ENCODE measurements at regions of chr16 and their contacts with region 1.

Region 1: GRCh38 chr16:79997257-79997656 is 396.7 kb upstream of the MAF start:
- DNase-seq: peak; percentile 3
- H3K4me3 ChIP-seq: no peak overlapping the region
- H3K27ac ChIP-seq: no peak overlapping the region
- H3K4me1 ChIP-seq: no peaks in the 10 kb centered on the region
- H3K27me3 ChIP-seq: no peaks in the 10 kb centered on the region
- CTCF ChIP-seq: peak in 1 of 2 donors; percentile 26
- POLR2A ChIP-seq: no peak

Region 2: DNA sequence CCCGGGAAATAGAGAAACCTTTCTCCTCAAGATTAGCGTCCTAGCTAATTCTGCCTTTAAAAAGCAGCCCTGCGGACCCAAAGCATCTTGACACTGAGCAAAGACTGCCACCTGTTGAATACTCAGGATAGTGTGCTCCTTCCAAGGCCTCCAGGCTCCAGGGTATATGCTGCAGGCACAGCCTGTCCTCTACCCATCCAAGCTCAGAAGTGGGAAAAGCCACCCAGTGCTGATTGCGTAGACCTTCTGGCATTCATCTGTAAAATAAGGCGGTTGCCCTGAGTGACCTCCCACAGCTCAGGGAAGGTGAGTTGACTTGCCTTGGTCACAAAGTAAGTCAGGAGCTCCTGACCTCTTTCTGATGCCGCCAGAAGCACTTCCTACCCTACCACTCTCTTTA is 87.4 kb after region 1 on chr16:
- CTCF ChIA-PET with region 1: interaction called, 20 read pairs
- POLR2A ChIA-PET with region 1: no interaction called
- dilution Hi-C with region 1: no loop called
- intact Hi-C with region 1: loop called (anchors 10 kb)
- DNase-seq: no peak
- H3K4me3 ChIP-seq: no peak overlapping the region
- H3K27ac ChIP-seq: no peak overlapping the region
- H3K4me1 ChIP-seq: no peaks in the 10 kb centered on the region
- H3K27me3 ChIP-seq: no peaks in the 10 kb centered on the region
- CTCF ChIP-seq: no peak
- POLR2A ChIP-seq: no peak

Region 3: GRCh38 chr16:80317599-80318037 is 320.4 kb after region 1 on chr16:
- CTCF ChIA-PET with region 1: no interaction called
- POLR2A ChIA-PET with region 1: no interaction called
- dilution Hi-C with region 1: no loop called
- intact Hi-C with region 1: loop called (anchors 2 kb)
- DNase-seq: no peak
- H3K4me3 ChIP-seq: no peak overlapping the region
- H3K27ac ChIP-seq: no peak overlapping the region
- H3K4me1 ChIP-seq: no peaks in the 10 kb centered on the region
- H3K27me3 ChIP-seq: no peaks in the 10 kb centered on the region
- CTCF ChIP-seq: peak in 1 of 2 donors; percentile 2
- POLR2A ChIP-seq: no peak

Region 4: GRCh38 chr16:80369138-80369958 is 372.1 kb after region 1 on chr16:
- CTCF ChIA-PET with region 1: interaction called, 41 read pairs
- POLR2A ChIA-PET with region 1: no interaction called
- dilution Hi-C with region 1: no loop called
- intact Hi-C with region 1: loop called (anchors 1 kb)
- DNase-seq: peak; percentile 37
- H3K4me3 ChIP-seq: no peak overlapping the region
- H3K27ac ChIP-seq: no peak overlapping the region
- H3K4me1 ChIP-seq: no peaks in the 10 kb centered on the region
- H3K27me3 ChIP-seq: no peaks in the 10 kb centered on the region
- CTCF ChIP-seq: peak; percentile 29 to 48
- POLR2A ChIP-seq: no peak

Region 5: GRCh38 chr16:80466024-80466987 is 469.0 kb after region 1 on chr16:
- CTCF ChIA-PET with region 1: interaction called, 37 read pairs
- POLR2A ChIA-PET with region 1: no interaction called
- dilution Hi-C with region 1: no loop called
- intact Hi-C with region 1: loop called (anchors 1 kb)
- DNase-seq: peak; percentile 39
- H3K4me3 ChIP-seq: no peak overlapping the region
- H3K27ac ChIP-seq: no peak overlapping the region
- H3K4me1 ChIP-seq: no peaks in the 10 kb centered on the region
- H3K27me3 ChIP-seq: no peaks in the 10 kb centered on the region
- CTCF ChIP-seq: peak; percentile 78 to 84
- POLR2A ChIP-seq: no peak